Activated CD4-positive, alpha-beta memory T cell treated with anti-CD3 and anti-CD28 coated beads for 36 hours (primary cell): ENCODE measurements at regions of chr10 and their contacts with region 1.

Region 1: DNA sequence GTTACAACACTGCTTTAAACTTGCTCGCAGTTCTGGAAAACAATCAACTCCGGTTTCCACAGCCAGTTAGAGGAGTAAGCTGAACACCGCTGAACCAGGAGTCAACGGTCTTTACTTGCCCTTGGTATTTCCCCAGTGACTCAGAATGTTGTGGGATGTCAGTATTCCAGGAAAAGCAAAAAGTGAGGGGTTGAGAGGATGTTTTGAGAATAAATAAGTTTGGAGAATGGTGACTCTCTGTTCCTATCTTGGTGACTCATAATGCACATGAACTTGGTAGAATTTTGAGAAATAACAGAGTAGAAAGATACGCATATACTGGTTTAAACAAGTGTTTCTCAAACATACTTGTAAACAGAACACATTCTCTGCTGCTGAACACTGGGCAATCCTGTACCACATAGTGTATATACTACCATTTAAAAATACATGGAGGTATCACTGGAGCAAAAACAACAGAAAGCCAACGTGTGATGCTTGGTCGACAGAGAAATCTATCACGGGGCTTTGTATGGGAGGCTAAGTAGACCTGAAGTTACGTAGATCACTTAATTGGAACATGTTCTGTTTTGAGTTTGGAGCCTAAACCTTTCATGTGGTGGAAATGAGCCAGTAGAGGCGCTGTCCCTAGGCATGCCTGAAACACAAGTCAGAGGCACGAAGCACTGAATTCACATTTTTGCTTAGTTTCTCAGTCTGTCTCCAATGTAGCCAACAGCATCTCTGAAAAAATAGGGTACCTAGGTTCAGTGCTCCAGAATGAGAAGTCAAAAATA is 534.3 kb downstream of the PARD3 start:
- DNase-seq: peak; percentile 47
- H3K4me3 Mint-ChIP-seq: no peak overlapping the region
- H3K27ac Mint-ChIP-seq: peak overlapping the region; percentile 75
- H3K4me1 Mint-ChIP-seq: peaks cover 25% of the 10 kb centered on the region
- H3K27me3 Mint-ChIP-seq: peaks cover 17% of the 10 kb centered on the region

Region 2: DNA sequence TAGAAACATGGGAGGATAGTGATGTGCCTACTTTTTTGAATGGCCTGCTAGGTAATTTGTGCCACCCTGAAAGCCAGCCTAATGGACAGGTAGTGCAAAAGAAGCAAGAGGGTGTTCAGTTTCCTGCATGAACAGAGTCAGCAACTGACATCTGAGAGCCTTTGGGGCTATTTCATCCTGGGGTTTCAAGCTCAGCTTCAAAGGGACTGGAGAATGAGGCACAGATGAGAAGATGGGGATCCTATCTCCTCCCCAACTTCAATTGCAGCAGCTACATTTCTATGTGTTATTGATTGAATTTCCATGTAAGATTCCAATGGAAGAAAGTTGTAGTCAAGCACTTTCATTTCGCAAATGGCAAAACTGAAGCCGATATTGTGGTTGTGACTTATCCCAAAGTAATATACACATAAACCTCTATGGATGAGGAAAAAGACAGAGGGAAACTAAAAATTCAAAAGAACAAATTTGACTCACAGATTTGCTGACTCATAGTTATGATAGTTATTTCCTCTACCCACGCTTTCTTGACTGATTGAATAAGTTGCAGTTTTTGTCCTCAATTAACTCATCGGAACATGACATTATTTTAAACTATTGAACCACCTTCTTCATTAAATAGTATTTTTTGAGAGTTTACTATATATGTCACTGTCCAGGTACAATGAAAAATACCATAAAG is 903.7 kb before region 1 on chr10:
- CTCF ChIA-PET with region 1: no interaction called
- POLR2A ChIA-PET with region 1: no interaction called
- intact Hi-C with region 1: loop called (anchors 2 kb)
- DNase-seq: no peak
- H3K4me3 Mint-ChIP-seq: no peak overlapping the region
- H3K27ac Mint-ChIP-seq: no peak overlapping the region
- H3K4me1 Mint-ChIP-seq: peaks cover 27% of the 10 kb centered on the region
- H3K27me3 Mint-ChIP-seq: peaks cover 13% of the 10 kb centered on the region

Region 3: DNA sequence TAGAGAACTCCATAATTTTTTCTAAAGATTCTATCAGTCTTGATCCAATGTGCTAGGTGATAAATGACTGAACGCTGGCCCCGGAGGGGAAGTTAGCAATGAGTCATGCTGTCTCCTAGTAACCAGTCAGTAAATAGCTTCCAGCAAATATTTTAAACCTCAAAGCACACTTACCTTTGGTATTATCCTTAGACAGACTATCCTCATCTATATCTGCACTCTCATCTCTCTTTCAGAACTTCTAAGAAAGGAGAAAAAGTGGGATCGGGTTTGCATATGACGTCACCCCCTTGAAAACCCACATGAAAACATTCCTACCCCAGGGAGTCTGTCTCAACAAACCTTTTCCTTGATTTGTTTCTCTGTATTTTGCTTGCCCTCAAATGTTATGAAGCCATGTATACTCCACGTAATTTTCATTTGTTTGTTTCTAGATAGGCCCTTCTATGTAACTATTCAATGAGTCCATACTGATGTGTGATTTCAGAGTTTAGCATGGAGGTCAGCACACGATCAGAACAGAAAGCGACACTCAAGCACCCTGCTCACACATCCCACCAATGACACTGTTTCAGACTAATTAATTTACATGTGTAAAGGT is 771.5 kb before region 1 on chr10:
- CTCF ChIA-PET with region 1: no interaction called
- POLR2A ChIA-PET with region 1: no interaction called
- intact Hi-C with region 1: loop called (anchors 5 kb)
- DNase-seq: peak; percentile 60
- H3K4me3 Mint-ChIP-seq: no peak overlapping the region
- H3K27ac Mint-ChIP-seq: no peak overlapping the region
- H3K4me1 Mint-ChIP-seq: peaks cover 13% of the 10 kb centered on the region
- H3K27me3 Mint-ChIP-seq: peaks cover 18% of the 10 kb centered on the region

Region 4: GRCh38 chr10:34121781-34122628 is 158.8 kb before region 1 on chr10:
- CTCF ChIA-PET with region 1: no interaction called
- POLR2A ChIA-PET with region 1: no interaction called
- intact Hi-C with region 1: loop called (anchors 5 kb)
- DNase-seq: peak; percentile 18
- H3K4me3 Mint-ChIP-seq: no peak overlapping the region
- H3K27ac Mint-ChIP-seq: no peak overlapping the region
- H3K4me1 Mint-ChIP-seq: peaks cover 24% of the 10 kb centered on the region
- H3K27me3 Mint-ChIP-seq: peaks cover 3% of the 10 kb centered on the region

Region 5: DNA sequence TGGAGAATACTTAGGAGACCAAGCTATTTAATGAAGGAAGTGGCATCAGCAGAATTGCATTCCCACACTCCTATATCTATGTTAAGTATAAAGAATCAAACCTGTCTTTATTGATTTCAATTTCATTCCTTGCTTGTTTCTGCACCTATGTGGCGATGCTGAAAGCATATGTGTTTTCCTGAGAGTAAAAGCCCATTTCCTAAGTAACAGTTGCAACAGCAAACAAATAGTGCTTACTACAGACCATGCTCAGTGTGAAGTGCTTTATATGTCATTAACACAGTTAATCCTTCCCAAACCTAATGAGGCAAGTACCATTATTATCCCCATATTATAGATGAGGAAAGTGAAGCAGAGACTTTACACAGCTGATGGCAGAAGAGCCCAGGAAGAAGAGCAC is 17.8 kb before region 1 on chr10:
- CTCF ChIA-PET with region 1: no interaction called
- POLR2A ChIA-PET with region 1: no interaction called
- intact Hi-C with region 1: loop called (anchors 1 kb)
- DNase-seq: no peak
- H3K4me3 Mint-ChIP-seq: no peak overlapping the region
- H3K27ac Mint-ChIP-seq: no peak overlapping the region
- H3K4me1 Mint-ChIP-seq: no peaks in the 10 kb centered on the region
- H3K27me3 Mint-ChIP-seq: peaks cover 2% of the 10 kb centered on the region

Region 6: GRCh38 chr10:34291466-34292193 is 10.8 kb after region 1 on chr10:
- CTCF ChIA-PET with region 1: no interaction called
- POLR2A ChIA-PET with region 1: no interaction called
- intact Hi-C with region 1: loop called (anchors 1 kb)
- DNase-seq: no peak
- H3K4me3 Mint-ChIP-seq: no peak overlapping the region
- H3K27ac Mint-ChIP-seq: no peak overlapping the region
- H3K4me1 Mint-ChIP-seq: peaks cover 8% of the 10 kb centered on the region
- H3K27me3 Mint-ChIP-seq: peaks cover 18% of the 10 kb centered on the region